Naive thymus-derived CD8-positive, alpha-beta T cell (primary cell): ENCODE measurements at regions of chr6 and their contacts with region 1.

Region 1: GRCh38 chr6:31971993-31972708 is at the start of gene DXO:
- DNase-seq: peak; percentile 89 to 100 (median 99)
- ATAC-seq: peak; percentile 87 to 90
- H3K4me3 Mint-ChIP-seq: peak within 1 kb of the TSS; percentile 94 to 99 (median 98)
- H3K27ac Mint-ChIP-seq: peak within 1 kb of the TSS; percentile 97 to 100 (median 100)
- H3K4me1 Mint-ChIP-seq: peaks cover 29 to 46% (median 42%) of the 10 kb centered on the region in 4 donors
- H3K27me3 Mint-ChIP-seq: peaks cover 0 to 4% (median 0%) of the 10 kb centered on the region in 5 donors
- polyA plus RNA-seq, gene DXO: 12.5 to 16.4 (median 14.5) TPM

Region 2: DNA sequence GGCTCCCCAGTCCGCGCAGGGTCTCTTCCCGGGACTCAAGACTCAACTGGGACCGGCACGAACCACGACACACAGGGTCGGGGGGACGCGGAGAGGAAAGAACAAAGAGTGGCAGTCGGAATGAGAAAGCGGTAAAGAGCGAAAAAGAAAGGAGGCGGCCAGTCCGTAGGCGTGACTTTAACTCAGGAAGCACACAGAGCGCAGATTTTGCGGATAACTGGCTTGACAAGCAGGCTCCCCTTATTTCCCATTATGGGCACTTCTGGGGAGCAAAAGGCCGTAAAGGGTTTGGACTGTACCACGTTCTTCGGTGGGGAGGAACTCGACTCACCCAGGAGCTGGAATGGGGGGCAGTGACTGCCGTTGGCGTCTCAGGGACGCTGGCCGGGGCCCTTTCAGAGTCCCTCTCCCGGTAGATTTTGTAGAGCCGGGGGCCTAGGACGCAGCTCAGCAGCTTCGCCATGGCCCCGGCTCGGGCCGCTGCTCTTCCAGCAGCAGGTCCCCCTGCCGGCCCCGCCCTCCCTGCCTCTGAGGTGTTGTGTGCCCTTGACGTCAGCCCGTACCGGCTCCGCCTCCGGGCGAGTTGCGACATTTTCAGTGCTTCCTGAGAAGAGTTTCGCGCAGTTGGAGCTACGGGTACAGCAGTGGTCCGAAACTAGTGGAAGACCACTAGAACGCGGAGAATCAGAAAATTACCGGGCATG is 269.2 kb before region 1 on chr6 and contains the start of gene ABHD16A:
- POLR2A ChIA-PET with region 1: interaction called, 10 read pairs
- DNase-seq: peak; percentile 93 to 99 (median 96)
- ATAC-seq: peak; percentile 93 to 94
- H3K4me3 Mint-ChIP-seq: peak within 1 kb of the TSS; percentile 95 to 100 (median 98)
- H3K27ac Mint-ChIP-seq: peak within 1 kb of the TSS; percentile 91 to 99 (median 96)
- H3K4me1 Mint-ChIP-seq: peaks cover 17 to 43% (median 33%) of the 10 kb centered on the region in 4 donors
- H3K27me3 Mint-ChIP-seq: no peaks in the 10 kb centered on the region
- polyA plus RNA-seq, gene ABHD16A: 26.9 to 35.5 (median 34.1) TPM

Region 3: DNA sequence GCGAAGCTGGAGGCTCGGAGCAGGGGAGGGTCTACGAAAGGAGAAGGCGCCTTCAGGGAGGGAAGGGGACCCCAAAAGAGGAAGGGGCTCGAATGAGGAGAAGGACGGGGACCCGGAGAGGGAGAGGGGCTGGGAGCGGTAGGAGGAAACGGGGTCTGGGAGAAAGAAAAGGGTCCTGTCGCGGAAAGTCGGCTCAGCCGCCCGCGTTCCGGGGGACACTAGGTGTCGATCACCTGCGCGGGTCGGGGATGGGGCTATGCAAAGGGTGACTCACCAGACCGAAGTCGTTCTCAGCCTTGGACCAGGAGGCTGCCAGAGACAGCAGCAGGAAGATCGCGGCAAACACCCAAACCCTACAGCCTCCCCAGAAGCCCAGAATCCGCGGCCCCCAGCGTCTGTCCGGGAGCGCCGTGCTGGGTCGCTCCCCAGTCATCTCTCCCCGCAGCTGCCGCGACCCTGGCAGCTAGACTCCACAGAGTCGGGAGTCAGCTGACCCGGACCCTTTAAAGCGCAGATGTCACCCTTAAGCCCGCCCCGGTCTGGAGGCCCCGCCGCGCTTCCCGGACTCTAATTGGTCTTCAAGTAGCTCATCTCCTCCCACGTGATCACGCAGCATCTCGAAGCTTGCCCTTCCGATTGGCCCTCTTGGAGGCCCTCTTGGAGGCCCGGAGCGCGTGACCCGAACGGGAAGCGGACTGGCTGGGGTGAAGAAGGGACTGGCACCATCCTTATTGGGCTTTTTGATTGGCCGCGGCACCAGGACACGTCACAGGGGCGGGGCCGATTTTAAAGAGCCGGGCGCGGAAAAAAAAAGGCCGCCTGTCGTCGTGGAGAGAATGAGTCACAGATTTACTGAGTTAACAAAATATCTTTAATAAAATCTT is 109.6 kb before region 1 on chr6 and contains the start of gene NEU1:
- POLR2A ChIA-PET with region 1: no interaction called
- DNase-seq: peak; percentile 90 to 100 (median 99)
- ATAC-seq: peak; percentile 91 to 97
- H3K4me3 Mint-ChIP-seq: peak within 1 kb of the TSS; percentile 87 to 98 (median 94)
- H3K27ac Mint-ChIP-seq: peak within 1 kb of the TSS; percentile 87 to 98 (median 96)
- H3K4me1 Mint-ChIP-seq: peaks cover 16 to 30% (median 27%) of the 10 kb centered on the region in 4 donors
- H3K27me3 Mint-ChIP-seq: no peaks in the 10 kb centered on the region
- polyA plus RNA-seq, gene NEU1: 10.9 to 17.9 (median 16.2) TPM

Region 4: DNA sequence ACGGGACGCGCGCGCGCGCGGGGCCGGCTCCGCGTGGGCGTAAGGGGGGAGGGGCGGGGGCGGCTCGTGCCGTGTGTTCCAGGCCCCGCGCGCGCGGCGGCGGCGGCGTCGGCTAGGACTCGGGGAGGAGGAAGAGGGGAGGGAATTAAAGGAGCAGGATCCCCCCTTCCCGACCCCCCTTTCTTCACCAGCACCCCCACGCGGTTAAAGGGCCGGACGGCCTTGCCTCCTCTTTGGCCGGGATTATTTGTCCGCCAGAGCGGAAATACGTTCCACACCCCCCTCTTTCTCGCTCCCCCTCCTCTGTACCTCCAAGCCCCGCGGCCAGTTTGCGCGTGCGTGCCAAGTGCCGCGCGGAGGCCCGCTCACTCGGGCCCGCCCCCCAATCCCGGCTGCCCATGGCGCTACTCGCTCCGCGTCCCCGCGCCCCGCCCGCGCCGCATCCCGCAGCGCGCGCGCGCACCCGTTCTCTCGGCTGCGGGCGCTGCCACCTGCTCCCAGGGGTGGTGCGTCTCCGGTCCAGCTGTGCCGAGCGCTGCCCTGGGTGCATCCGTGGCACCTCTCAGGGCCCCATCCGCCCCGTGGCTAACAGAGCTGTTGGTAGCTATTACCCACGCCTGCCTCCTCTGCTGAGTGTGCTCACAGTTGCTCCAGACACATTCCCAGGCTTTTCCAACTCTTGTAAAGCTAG is 70.1 kb before region 1 on chr6 and contains the start of gene ZBTB12:
- POLR2A ChIA-PET with region 1: interaction called, 17 read pairs
- DNase-seq: peak; percentile 78 to 91 (median 84)
- ATAC-seq: peak; percentile 58 to 65
- H3K4me3 Mint-ChIP-seq: peak within 1 kb of the TSS; percentile 78 to 94 (median 90)
- H3K27ac Mint-ChIP-seq: peak within 1 kb of the TSS; percentile 68 to 96 (median 92)
- H3K4me1 Mint-ChIP-seq: peaks cover 22 to 36% (median 32%) of the 10 kb centered on the region in 4 donors
- H3K27me3 Mint-ChIP-seq: no peaks in the 10 kb centered on the region
- polyA plus RNA-seq, gene ZBTB12: not detected

Region 5: DNA sequence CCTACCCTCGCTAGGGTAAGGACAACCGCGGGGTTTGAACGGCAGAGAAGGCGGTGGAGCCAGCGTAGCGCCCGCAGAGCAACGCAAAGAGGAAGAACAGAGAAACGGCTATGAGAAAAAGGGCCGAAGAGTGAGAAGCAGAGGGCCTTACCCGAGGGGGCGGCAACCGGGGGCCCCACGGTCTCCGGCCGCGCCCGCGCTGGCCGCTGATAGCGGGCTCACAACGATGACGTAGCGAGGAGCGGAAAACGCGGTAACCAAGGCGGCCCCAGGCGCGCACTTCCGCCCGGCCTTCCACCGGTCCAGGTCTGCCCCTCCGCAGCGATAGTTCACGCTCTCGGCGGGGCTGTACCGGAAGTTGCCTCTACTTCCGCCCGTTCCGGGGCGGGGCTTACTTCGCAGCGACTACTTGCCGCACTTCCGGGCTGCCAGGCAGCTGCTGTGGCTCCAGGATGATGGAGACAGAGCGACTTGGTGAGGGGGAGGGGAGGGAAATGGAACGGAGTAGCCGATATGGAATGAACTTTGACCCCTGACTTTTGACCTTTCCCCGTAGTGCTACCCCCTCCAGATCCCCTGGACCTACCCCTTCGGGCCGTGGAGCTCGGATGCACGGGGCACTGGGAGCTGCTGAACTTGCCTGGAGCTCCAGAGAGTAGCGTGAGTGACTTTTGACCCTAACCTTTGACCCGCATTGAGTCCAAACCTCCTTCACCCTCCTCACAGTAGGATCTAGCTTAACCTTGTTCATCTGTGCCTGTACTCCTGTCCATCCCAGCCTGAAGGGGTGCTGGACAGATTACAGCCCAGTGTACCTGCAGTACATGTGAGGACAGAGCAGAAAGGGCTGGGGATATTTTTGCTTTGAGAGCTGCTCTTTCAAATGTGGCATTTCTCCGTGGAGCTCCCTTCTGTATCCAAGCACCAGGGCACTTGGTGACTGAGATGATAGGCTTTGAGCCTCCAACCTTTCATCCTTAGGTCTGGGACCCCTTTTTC is 13.1 kb before region 1 on chr6 and contains the starts of genes NELFE and SKIC2:
- POLR2A ChIA-PET with region 1: interaction called, 119 read pairs
- DNase-seq: peak; percentile 95 to 99 (median 98)
- ATAC-seq: peak; percentile 96 to 98
- H3K4me3 Mint-ChIP-seq: peak within 1 kb of the TSS; percentile 92 to 97 (median 96)
- H3K27ac Mint-ChIP-seq: peak within 1 kb of the TSS; percentile 94 to 99 (median 98)
- H3K4me1 Mint-ChIP-seq: peaks cover 27 to 53% (median 40%) of the 10 kb centered on the region in 4 donors
- H3K27me3 Mint-ChIP-seq: no peaks in the 10 kb centered on the region
- polyA plus RNA-seq, gene NELFE: 55.9 to 68.6 (median 66.4) TPM
- polyA plus RNA-seq, gene SKIC2: 18.1 to 19.9 (median 19.4) TPM